ENCODE measurements at regions of chr15 and their contacts with region 1.

Region 1: GRCh38 chr15:74307827-74308644 is 59.4 kb downstream of the CYP11A1 start:
- DNase-seq: peak; percentile 87
- H3K4me3 ChIP-seq: peak overlapping the region in 1 of 2 experiments; percentile 13; a peak in 1 of 4 replicates
- H3K27ac ChIP-seq: peak overlapping the region in 1 of 2 experiments; percentile 95; a peak in 2 of 4 replicates
- H3K4me1 ChIP-seq: peaks cover 0 to 64% of the 10 kb centered on the region in 2 experiments; a peak in 2 of 4 replicates
- H3K27me3 ChIP-seq: no peaks in the 10 kb centered on the region
- CTCF ChIP-seq: peak; percentile 77
- EP300 ChIP-seq: no peak; a peak in 1 of 4 replicates
- RAD21 ChIP-seq: peak; percentile 90

Region 2: DNA sequence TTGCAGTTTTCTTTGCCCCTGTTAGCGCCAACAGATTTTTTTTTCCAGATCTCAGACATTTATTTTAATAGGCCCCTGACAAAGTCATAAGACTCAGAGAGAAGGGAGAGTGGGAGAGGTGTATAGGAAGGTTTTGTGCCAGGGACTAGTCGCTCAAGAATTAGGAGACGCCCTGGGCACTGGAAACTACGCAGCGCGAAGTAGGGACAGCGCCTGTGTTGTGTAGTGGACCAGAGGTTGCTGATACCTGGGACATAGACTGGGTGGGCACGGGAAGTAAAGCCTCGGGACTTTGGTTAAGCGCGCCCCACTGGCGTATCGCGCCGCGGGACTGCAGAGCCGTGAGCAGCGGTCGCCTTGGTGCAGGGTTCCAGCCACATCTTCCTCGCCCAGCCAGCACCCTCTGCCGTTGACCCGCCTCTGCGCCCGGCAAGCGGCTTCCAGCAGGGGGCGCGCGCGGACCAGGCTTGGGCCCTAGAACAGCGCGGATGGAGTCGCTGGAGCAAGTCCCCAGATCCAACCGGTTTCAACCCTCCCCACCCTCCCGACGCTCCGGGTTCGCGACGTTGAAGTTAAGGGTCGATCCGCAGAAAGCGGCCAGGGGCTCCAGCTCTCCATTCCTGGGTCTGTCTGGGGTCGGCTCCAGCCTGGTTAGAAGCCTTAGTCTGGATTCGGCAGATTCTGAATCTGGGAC is 180.6 kb before region 1 on chr15:
- CTCF ChIA-PET with region 1: interaction called, 110 read pairs
- POLR2A ChIA-PET with region 1: interaction called, 7 read pairs
- DNase-seq: peak; percentile 94
- H3K4me3 ChIP-seq: peak overlapping the region; percentile 42 to 59
- H3K27ac ChIP-seq: peak overlapping the region in 1 of 2 experiments; percentile 65; a peak in 1 of 4 replicates
- H3K4me1 ChIP-seq: peaks cover 0 to 31% of the 10 kb centered on the region in 2 experiments; a peak in 1 of 4 replicates
- H3K27me3 ChIP-seq: peaks cover 32% of the 10 kb centered on the region
- CTCF ChIP-seq: peak; percentile 80
- EP300 ChIP-seq: no peak
- RAD21 ChIP-seq: peak; percentile 97

Region 3: GRCh38 chr15:74172701-74173379 is 135.2 kb before region 1 on chr15:
- CTCF ChIA-PET with region 1: interaction called, 24 read pairs
- POLR2A ChIA-PET with region 1: interaction called, 5 read pairs
- DNase-seq: peak; percentile 61
- H3K4me3 ChIP-seq: no peak overlapping the region
- H3K27ac ChIP-seq: peak overlapping the region in 1 of 2 experiments; percentile 86; a peak in 3 of 4 replicates
- H3K4me1 ChIP-seq: peaks cover 26 to 68% of the 10 kb centered on the region in 2 experiments; a peak in 3 of 4 replicates
- H3K27me3 ChIP-seq: no peaks in the 10 kb centered on the region
- CTCF ChIP-seq: no peak
- EP300 ChIP-seq: no peak
- RAD21 ChIP-seq: no peak

Region 4: GRCh38 chr15:74202452-74203428 is 105.3 kb before region 1 on chr15 and contains the start of gene STRA6:
- CTCF ChIA-PET with region 1: interaction called, 85 read pairs
- POLR2A ChIA-PET with region 1: interaction called, 9 read pairs
- DNase-seq: peak; percentile 90
- H3K4me3 ChIP-seq: peak within 1 kb of the TSS; percentile 18 to 50; a peak in 3 of 4 replicates
- H3K27ac ChIP-seq: peak within 1 kb of the TSS; percentile 80 to 97
- H3K4me1 ChIP-seq: peaks cover 64 to 95% of the 10 kb centered on the region in 2 experiments
- H3K27me3 ChIP-seq: no peaks in the 10 kb centered on the region
- CTCF ChIP-seq: peak; percentile 35
- EP300 ChIP-seq: peak; percentile 17 to 48; a peak in 1 of 4 replicates
- RAD21 ChIP-seq: peak; percentile 45; the same call in 1 of the 2 replicates
- polyA plus RNA-seq, gene STRA6: 27.9 and 31.0 TPM in 2 replicates

Region 5: GRCh38 chr15:74240002-74240568 is 68.0 kb before region 1 on chr15:
- CTCF ChIA-PET with region 1: interaction called, 14 read pairs
- POLR2A ChIA-PET with region 1: no interaction called
- DNase-seq: peak; percentile 82
- H3K4me3 ChIP-seq: no peak overlapping the region
- H3K27ac ChIP-seq: peak overlapping the region; percentile 70 to 97
- H3K4me1 ChIP-seq: peaks cover 49 to 59% of the 10 kb centered on the region in 2 experiments
- H3K27me3 ChIP-seq: no peaks in the 10 kb centered on the region
- CTCF ChIP-seq: peak; percentile 72
- EP300 ChIP-seq: peak; percentile 63 to 81; a peak in 3 of 4 replicates
- RAD21 ChIP-seq: peak; percentile 41

Region 6: GRCh38 chr15:74291101-74292071 is 16.6 kb before region 1 on chr15:
- CTCF ChIA-PET with region 1: interaction called, 55 read pairs
- POLR2A ChIA-PET with region 1: interaction called, 7 read pairs
- DNase-seq: peak; percentile 85
- H3K4me3 ChIP-seq: no peak overlapping the region; a peak in 1 of 4 replicates
- H3K27ac ChIP-seq: peak overlapping the region; percentile 40 to 100; a peak in 3 of 4 replicates
- H3K4me1 ChIP-seq: peaks cover 5 to 70% of the 10 kb centered on the region in 2 experiments; a peak in 3 of 4 replicates
- H3K27me3 ChIP-seq: no peaks in the 10 kb centered on the region
- CTCF ChIP-seq: no peak
- EP300 ChIP-seq: peak; percentile 61 to 99
- RAD21 ChIP-seq: peak; percentile 42

Measured in SK-N-SH (cell line).